Activated CD4-positive, alpha-beta T cell treated with anti-CD3 and anti-CD28 coated beads for 36 hours (primary cell): ENCODE measurements at regions of chr5 and their contacts with region 1.

Region 1: DNA sequence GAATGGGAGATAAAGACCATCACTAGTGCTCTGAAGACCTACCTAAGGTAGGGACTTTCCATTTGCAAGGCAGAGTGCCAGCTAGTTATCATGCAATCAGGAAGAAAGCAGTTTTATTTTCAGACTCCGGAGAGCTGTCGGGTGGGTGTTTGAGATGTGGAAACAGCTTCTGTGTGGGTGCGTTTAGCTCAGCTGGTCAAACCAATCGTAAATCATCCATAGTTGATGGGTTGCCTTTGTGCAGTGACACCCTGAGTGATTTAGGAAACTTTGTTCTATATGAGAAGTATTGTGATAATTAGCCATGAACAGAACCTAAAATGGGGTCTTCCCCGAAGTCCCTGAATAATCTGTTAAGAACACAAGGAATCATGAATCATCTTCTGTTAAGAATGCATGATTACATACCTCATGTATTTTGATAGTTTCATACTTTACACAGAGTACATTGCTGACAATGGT is 284.3 kb downstream of the ARHGAP26 start:
- DNase-seq: peak; percentile 49
- ATAC-seq: peak; percentile 40
- H3K4me3 Mint-ChIP-seq: no peak overlapping the region
- H3K27ac Mint-ChIP-seq: peak overlapping the region; percentile 90
- H3K4me1 Mint-ChIP-seq: peaks cover 75% of the 10 kb centered on the region
- H3K27me3 Mint-ChIP-seq: no peaks in the 10 kb centered on the region

Region 2: DNA sequence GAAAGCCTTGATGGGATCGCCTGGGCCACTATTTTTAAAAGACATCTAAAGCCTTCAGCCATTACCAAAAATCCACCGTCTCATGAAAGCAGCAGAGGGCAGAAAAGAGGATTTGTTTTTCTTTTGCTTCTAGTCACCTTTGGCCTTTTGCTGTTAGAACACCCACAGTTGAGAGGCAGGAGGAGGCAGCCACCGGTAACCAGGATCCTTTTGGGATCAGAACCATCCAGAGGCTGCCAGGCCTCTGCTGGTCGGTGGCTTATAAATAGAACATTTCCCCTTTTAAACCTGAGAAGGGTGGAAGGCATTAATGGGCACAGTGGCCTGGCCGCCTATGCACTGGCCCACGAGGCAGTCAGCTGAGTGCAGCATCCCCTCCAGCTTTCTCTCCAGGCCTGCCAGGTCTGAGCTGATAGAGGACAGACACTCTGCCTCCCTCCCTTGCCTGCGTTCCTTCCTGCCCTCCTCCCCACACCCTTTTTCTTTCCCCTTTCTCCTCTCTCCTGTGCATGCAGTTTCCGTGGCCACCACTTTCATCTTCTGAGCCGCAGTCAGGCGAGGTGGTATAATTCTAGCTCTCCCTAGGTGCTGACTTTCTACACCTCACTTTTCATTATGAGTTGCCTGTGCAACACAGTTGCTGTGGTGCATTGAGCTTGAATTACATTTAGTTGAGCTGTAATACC is 31.0 kb before region 1 on chr5:
- CTCF ChIA-PET with region 1: interaction called, 3 read pairs
- POLR2A ChIA-PET with region 1: no interaction called
- intact Hi-C with region 1: loop called (anchors 2 to 5 kb)
- DNase-seq: peak; percentile 77
- ATAC-seq: peak; percentile 88
- H3K4me3 Mint-ChIP-seq: no peak overlapping the region
- H3K27ac Mint-ChIP-seq: peak overlapping the region; percentile 1
- H3K4me1 Mint-ChIP-seq: peaks cover 48% of the 10 kb centered on the region
- H3K27me3 Mint-ChIP-seq: no peaks in the 10 kb centered on the region

Region 3: GRCh38 chr5:143101121-143101520 is 46.6 kb after region 1 on chr5:
- CTCF ChIA-PET with region 1: no interaction called
- POLR2A ChIA-PET with region 1: no interaction called
- intact Hi-C with region 1: loop called in 1 of 2 experiments (anchors 1 kb)
- DNase-seq: no peak
- ATAC-seq: peak; percentile 81
- H3K4me3 Mint-ChIP-seq: peak overlapping the region; percentile 7
- H3K27ac Mint-ChIP-seq: peak overlapping the region; percentile 68
- H3K4me1 Mint-ChIP-seq: peaks cover 31% of the 10 kb centered on the region
- H3K27me3 Mint-ChIP-seq: no peaks in the 10 kb centered on the region

Region 4: DNA sequence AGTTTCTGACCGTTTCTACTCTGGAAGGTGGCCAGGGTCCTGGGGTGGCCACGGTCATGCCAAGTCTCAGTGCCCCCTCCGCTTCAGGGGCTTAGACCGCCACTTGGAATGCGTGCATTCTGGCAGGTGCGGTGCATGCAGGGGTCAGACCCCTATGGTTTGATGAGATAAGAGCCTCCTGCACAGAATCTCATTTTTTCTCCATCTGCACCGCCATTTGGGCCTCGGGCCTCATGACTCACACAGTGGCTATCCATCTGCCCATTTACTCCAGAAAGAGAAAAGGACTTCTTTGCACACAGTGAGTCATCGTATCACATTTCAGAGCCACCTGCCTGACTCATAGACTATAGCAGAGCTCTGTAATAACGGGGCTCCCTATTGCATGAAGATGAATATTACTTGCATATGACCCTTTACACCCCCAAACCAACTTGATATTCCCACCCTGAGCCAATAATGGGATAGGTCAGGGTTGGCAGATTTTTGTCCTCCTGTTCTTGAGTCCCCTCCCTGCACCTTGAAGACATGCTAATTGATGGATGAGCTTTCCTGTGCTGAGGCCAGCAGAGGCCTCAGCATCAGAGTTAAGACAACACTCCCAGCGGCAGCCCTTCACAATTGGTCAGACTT is 191.5 kb after region 1 on chr5:
- CTCF ChIA-PET with region 1: no interaction called
- POLR2A ChIA-PET with region 1: interaction called, 11 read pairs
- intact Hi-C with region 1: no loop called
- DNase-seq: no peak
- ATAC-seq: no peak
- H3K4me3 Mint-ChIP-seq: no peak overlapping the region
- H3K27ac Mint-ChIP-seq: no peak overlapping the region
- H3K4me1 Mint-ChIP-seq: no peaks in the 10 kb centered on the region
- H3K27me3 Mint-ChIP-seq: no peaks in the 10 kb centered on the region